ENCODE measurements at regions of chr6 and their contacts with region 1.

Region 1: DNA sequence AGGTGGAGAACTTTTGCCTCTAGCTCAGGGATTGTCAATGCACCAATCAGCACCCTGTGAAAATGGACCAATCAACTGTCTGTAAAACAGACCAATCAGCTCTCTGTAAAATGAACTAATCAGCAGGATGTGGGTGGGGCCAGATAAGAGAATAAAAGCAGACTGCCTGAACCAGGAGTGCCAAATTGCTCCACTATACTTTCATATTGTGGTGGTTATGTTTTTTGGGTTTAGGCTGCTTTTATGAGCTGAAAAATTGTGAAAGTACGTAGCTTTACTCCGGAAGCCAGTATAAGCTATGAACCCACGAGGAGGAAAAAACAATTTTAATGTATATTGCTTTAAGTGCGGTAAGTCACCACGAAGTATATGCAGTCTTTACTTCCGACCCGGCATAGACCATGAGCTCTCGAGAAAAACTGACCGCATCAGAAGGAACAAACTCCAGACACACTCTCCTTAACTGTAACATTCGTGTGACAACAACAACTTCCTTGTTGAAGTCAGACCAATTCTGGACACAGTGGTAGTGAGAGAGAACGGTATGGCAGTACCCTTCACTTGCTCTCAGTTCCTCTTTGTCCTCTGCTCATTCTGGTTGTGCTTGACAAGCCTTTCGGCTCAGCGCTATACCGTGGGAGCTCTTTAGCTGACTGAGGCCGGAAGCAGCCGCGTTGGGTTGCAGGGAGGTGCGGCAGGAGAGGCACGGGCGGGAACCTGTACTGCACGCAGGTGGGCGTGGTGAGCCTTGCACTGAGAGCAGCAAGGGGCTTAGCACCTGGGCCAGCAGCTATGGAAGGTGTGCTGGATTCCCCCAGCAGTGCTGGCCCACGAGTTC is 81.9 kb upstream of the E2F3 start:
- DNase-seq: peak; percentile 93
- ATAC-seq: peak; percentile 92
- H3K4me3 Mint-ChIP-seq: peak overlapping the region; percentile 80
- H3K27ac Mint-ChIP-seq: peak overlapping the region; percentile 99
- H3K4me1 Mint-ChIP-seq: peaks cover 30% of the 10 kb centered on the region
- H3K27me3 Mint-ChIP-seq: peaks cover 3% of the 10 kb centered on the region

Region 2: GRCh38 chr6:20212392-20213217 is 107.1 kb before region 1 on chr6 and contains the start of gene MBOAT1:
- CTCF ChIA-PET with region 1: no interaction called
- POLR2A ChIA-PET with region 1: interaction called, 17 read pairs
- DNase-seq: peak; percentile 80
- ATAC-seq: peak; percentile 91
- H3K4me3 Mint-ChIP-seq: peak within 1 kb of the TSS; percentile 89
- H3K27ac Mint-ChIP-seq: peak within 1 kb of the TSS; percentile 98
- H3K4me1 Mint-ChIP-seq: peaks cover 36% of the 10 kb centered on the region
- H3K27me3 Mint-ChIP-seq: peaks cover 6% of the 10 kb centered on the region
- total RNA-seq, gene MBOAT1: 14.2 to 15.5 TPM

Region 3: DNA sequence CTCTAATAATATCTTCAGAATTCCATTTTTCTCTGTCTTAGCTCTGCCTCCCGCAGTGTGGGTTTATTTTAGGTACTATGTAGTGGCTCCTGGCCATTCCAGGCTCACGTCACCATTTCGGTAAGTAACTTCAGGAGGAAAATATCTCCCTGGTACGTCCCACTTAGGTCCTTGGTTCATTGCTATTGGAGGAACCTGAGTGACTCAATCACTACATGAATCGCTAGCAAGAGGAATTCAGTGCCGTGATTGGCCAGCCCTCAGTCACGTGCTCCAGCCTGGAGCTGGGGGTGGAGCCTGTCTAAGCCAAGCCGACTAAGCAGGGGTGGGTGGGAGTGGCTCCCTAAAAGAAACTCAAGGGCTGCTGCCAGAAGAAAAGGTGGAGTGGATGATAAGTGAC is 14.6 kb after region 1 on chr6:
- CTCF ChIA-PET with region 1: interaction called, 8 read pairs
- POLR2A ChIA-PET with region 1: interaction called, 45 read pairs
- DNase-seq: no peak
- ATAC-seq: no peak
- H3K4me3 Mint-ChIP-seq: no peak overlapping the region
- H3K27ac Mint-ChIP-seq: no peak overlapping the region
- H3K4me1 Mint-ChIP-seq: peaks cover 31% of the 10 kb centered on the region
- H3K27me3 Mint-ChIP-seq: no peaks in the 10 kb centered on the region

Region 4: GRCh38 chr6:20366091-20366832 is 46.5 kb after region 1 on chr6:
- CTCF ChIA-PET with region 1: interaction called, 26 read pairs
- POLR2A ChIA-PET with region 1: interaction called, 110 read pairs
- DNase-seq: peak; percentile 64
- ATAC-seq: peak; percentile 75
- H3K4me3 Mint-ChIP-seq: peak overlapping the region; percentile 61
- H3K27ac Mint-ChIP-seq: peak overlapping the region; percentile 95
- H3K4me1 Mint-ChIP-seq: peaks cover 63% of the 10 kb centered on the region
- H3K27me3 Mint-ChIP-seq: no peaks in the 10 kb centered on the region

Region 5: DNA sequence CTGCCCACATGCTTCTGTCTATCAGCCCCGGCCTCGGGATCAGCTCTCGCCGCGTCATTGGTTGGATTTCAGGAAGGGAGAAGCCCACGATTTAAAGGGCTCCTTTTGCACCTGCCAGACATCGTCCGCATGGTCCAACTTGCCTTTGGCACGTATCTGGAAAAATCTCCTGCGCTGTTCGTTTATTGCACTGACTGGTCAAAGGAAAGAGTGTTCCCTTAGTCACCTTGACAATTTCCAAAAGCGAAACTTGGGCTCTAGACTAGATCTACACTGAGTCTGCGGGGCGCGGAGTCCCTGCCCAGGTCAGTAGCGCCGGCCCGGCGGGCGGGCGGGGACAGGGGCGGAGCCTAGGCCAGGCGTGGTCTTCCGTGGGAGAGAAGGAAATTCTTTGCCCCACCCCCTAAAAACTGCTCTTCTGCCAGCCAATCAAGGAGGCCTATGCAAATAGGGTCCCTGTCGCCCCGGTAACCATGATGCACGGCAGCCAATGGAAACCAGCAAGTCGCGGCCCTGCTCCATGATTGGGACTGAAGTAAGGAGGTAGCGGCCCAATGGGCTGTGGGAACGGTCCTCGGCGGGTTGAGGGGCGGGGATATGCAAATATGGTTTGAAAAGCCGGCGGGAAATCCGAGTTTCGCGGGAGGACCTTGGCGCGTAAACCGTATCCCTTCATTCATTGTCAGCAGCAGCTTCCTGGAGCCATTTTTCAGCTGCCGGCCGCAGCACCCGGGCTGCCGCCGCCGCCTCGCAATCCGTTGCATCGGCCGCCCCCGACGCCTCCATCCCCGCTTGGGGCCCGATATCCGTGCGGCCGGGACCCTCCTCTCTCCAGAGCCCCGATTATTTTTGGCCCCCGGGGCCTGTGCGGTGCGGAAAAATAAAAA is 81.7 kb after region 1 on chr6 and contains the start of gene E2F3:
- CTCF ChIA-PET with region 1: interaction called, 43 read pairs
- POLR2A ChIA-PET with region 1: interaction called, 166 read pairs
- DNase-seq: peak; percentile 100
- ATAC-seq: peak; percentile 86
- H3K4me3 Mint-ChIP-seq: peak within 1 kb of the TSS; percentile 86
- H3K27ac Mint-ChIP-seq: peak within 1 kb of the TSS; percentile 98
- H3K4me1 Mint-ChIP-seq: peaks cover 35% of the 10 kb centered on the region
- H3K27me3 Mint-ChIP-seq: no peaks in the 10 kb centered on the region
- total RNA-seq, gene E2F3: 26.7 to 27.4 TPM

Measured in activated CD8-positive, alpha-beta T cell treated with anti-CD3 and anti-CD28 coated beads, Interleukin-2, amount 10 ng/mL, durations not matched to agents 7 days and 5 days (primary cell).